ENCODE measurements at regions of chr1 and their contacts with region 1.

Region 1: DNA sequence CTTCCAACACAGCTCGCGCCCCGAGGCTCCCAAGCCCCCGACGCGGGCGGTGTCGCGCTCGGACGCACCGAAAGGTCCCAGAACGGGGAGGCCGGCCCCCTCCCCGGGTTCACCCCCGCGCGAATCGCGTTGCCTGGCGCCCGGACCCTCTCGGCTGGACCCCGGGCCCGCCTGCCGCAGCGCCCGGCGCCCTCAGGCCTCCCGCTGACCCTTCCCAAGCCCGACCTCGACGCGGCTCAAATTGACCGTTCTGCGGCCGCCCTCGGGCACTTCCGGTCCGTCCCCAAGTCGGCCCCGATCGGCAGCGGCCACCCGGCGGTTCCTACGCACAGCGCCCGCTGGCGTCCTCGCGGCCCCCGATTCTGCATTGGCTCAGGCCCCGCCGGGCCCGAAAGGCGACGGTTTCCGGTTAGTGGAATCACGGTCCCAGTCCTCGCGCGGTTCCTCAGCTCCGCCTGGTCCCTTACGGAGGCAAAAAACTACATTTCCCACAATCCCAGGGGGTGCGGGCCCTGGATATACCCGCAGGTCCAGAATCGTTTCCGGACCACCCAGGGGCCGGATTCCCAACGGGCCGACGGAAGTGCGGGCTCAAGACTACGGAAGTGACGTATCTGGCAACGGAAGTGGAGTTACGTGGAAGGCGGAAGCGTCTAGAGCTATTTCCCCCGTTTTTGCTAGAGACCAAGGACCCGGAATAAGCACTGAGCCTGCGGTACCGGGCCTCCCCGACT is at the start of gene AURKAIP1:
- DNase-seq: peak; percentile 100
- ATAC-seq: peak; percentile 89
- H3K4me3 ChIP-seq: peak within 1 kb of the TSS; percentile 73 to 93
- H3K27ac ChIP-seq: peak within 1 kb of the TSS; percentile 99
- H3K4me1 ChIP-seq: peaks cover 14 to 33% of the 10 kb centered on the region in 2 experiments
- H3K27me3 ChIP-seq: no peaks in the 10 kb centered on the region
- CTCF ChIP-seq: peak in 2 of 3 experiments; percentile 16 to 29; a peak in 1 of 6 replicates
- POLR2A ChIP-seq: peak; percentile 59
- RAD21 ChIP-seq: no peak
- total RNA-seq, gene AURKAIP1: 200 TPM

Region 2: DNA sequence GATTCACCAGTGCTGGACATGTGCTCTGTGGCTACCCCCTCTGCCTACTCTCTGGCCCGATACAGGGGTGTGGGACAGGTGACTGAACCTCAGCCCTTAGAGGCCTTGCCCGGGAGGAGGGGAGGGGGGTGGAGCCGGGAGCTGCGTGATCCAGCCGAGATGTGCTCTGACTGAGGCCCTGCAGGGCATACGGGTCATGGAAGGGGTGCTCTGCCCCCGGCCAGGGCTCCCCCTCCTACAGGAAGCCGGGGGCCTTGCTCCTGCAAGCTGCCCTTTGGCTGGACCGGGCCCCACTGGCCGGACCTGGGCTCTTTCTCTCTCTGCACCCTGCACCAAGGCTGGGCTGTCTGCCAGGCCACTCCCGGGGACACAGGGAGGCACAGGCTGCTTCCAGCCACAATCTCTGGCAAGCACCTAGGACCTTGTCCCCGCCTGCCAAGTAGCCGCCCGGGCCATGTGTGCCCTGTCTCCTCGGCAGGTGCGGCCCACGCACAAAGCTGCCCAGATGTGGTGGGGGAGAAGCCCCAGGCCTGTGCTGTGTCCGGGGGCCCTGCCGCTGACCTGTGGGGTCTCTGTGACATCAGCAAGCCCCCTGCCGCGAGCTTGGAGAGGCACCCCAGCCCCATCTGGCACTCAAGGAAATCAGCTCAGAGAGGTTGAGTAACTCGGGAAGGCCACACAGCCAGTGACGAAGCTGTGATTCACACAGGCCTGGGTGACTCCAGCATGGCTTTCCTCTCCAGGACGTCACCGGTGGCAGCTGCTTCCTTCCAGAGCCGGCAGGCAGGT is 93.4 kb before region 1 on chr1:
- CTCF ChIA-PET with region 1: no interaction called
- POLR2A ChIA-PET with region 1: no interaction called
- RAD21 ChIA-PET with region 1: no interaction called
- intact Hi-C with region 1: no loop called
- DNase-seq: no peak
- ATAC-seq: 0 out of 2 replicates have a peak, but pooled peaks have one; percentile 35
- H3K4me3 ChIP-seq: no peak overlapping the region
- H3K27ac ChIP-seq: no peak overlapping the region; the same call in 1 of the 2 replicates
- H3K4me1 ChIP-seq: peaks cover 0 to 26% of the 10 kb centered on the region in 2 experiments; a peak in 3 of 4 replicates
- H3K27me3 ChIP-seq: no peaks in the 10 kb centered on the region
- CTCF ChIP-seq: no peak
- POLR2A ChIP-seq: no peak
- RAD21 ChIP-seq: no peak

Region 3: DNA sequence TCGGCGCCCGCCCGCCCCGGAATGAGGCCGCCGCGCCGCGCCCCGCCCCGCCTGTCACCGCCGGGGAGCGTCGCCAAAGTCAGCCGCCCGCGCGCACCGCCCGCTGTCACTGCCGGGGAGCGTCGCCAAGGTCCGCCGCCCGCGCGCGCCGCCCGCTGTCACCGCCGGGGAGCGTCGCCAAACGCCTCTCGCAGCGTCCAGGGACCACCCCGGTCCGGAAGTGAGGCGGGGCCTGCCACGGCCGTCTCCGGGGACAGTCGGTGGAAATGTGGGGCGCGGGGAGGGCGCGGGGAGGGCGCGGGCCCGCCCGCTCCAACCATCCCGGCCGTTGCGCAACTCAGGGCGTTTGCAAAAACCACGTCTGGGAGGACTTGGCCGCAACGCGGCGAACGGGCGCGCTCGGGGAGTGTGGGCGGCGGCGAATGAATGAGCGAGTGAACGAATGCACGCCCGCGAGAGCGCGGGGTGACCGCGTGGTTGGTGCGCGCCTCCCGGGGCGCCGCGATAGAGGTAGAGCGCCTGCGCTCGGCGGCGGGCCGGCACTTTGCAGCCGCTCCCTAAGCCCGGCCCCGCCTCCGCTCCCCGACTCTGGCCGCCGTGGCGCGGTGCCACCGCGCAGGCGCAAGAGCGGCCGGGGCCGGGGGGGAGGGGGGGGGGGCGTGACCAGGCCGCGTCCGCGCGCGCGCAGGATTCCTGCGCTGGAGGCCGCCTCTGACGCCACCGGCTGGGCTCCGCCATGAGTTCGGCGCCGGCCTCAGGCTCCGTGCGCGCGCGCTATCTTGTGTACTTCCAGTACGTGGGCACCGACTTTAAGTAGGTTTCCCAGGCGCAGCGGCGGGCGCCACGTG is 67.0 kb before region 1 on chr1 and contains the starts of genes ACAP3 and PUSL1:
- CTCF ChIA-PET with region 1: no interaction called
- POLR2A ChIA-PET with region 1: interaction called, 5 read pairs
- RAD21 ChIA-PET with region 1: no interaction called
- intact Hi-C with region 1: loop called (anchors 2 kb)
- DNase-seq: peak; percentile 83
- ATAC-seq: peak; percentile 53
- H3K4me3 ChIP-seq: peak within 1 kb of the TSS; percentile 60 to 86
- H3K27ac ChIP-seq: peak within 1 kb of the TSS; percentile 99
- H3K4me1 ChIP-seq: peaks cover 36 to 55% of the 10 kb centered on the region in 2 experiments
- H3K27me3 ChIP-seq: no peaks in the 10 kb centered on the region
- CTCF ChIP-seq: no peak
- POLR2A ChIP-seq: no peak
- RAD21 ChIP-seq: no peak
- total RNA-seq, gene ACAP3: 38.8 TPM
- total RNA-seq, gene PUSL1: 47.2 TPM

Measured in HCT116 (cell line).